Endothelial cell of umbilical vein (primary cell): ENCODE measurements at regions of chr3 and their contacts with region 1.

Region 1: DNA sequence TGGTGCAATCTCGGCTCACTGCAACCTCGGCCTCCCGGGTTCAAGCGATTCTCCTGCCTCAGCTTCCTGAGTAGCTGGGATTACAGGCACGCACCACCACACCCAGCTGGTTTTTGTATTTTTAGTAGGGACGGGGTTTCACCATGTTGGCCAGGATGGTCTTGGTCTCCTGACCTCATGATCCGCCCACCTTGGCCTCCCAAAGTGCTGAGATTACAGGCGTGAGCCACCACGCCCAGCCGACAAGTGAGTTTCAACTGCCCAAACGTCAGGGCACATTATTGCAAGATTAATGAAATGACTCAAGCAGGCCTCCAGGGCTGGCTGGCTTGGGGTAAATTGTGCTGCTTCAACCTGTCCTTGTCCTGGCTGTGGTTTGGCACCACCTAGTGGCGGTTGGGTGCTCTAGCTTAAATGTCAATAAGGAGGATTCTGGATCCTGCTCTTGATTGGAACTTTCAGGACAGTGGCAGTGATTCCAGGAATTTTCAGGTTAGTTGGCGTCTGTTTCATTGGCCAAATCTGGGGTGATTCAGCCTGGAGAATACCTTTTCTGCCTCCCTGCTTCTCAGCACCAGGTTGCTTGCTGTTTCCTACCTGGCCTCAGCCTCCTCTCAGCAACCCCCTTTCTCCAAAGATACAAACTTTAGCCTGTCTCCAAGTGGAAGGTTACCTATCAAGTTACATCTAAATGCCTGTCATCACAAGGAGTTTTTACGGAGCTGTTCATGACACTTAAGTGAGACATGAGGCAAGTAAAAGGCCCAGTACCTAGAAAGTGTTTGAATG is 32.4 kb upstream of the SACM1L start:
- DNase-seq: peak; percentile 90
- H3K4me3 ChIP-seq: no peak overlapping the region
- H3K27ac ChIP-seq: no peak overlapping the region
- H3K4me1 ChIP-seq: peaks cover 17% of the 10 kb centered on the region
- H3K27me3 ChIP-seq: no peaks in the 10 kb centered on the region
- CTCF ChIP-seq: peak; percentile 91 to 93
- POLR2A ChIP-seq: no peak

Region 2: GRCh38 chr3:45037734-45038455 is 618.9 kb before region 1 on chr3:
- CTCF ChIA-PET with region 1: interaction called, 6 read pairs
- POLR2A ChIA-PET with region 1: no interaction called
- dilution Hi-C with region 1: no loop called
- intact Hi-C with region 1: loop called (anchors 1 kb)
- DNase-seq: peak; percentile 95
- H3K4me3 ChIP-seq: no peak overlapping the region
- H3K27ac ChIP-seq: no peak overlapping the region
- H3K4me1 ChIP-seq: no peaks in the 10 kb centered on the region
- H3K27me3 ChIP-seq: no peaks in the 10 kb centered on the region
- CTCF ChIP-seq: peak; percentile 94 to 95
- POLR2A ChIP-seq: no peak

Region 3: DNA sequence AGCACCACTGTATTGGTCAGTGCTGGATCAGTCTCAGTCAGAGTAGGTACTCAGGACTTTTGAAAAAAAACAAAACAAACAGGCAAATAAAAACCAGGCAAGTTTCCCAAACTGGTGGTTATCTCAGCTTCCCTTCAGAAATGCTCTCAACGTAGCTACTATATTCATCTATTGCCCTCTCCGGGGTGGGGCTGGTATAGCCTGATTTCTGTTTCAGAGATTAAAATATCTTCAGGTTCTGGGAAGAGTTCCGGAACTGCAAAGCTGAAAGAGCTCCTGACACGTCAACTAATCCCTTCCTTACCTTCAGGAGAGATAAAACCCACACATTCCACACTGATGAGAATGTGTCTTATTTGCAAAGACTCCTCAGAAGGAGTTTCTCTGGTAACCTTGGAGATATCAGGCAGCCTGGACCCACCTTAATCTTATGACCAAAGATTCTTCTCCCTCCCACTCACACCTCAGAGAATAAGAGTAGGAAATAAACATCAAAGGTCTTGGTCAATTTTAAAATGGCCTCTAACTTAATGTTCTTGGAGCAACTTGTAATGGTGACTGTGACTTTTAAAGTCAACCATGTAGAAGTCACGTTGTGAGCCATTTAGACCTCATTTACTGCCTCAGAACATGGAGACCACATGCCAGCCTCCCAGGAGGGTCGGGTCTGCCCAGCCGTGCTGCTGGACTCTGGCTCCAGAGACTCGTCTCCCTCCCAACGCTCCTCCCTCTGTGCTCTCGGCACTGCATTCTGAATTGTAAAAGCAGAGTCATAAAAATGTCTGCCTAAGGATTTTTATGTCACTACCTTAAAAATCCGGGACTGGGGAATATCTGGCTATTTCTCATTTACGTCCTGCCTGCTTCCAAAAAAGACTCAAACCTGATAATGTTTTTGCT is 564.4 kb before region 1 on chr3:
- CTCF ChIA-PET with region 1: no interaction called
- POLR2A ChIA-PET with region 1: no interaction called
- dilution Hi-C with region 1: no loop called
- intact Hi-C with region 1: no loop called
- DNase-seq: no peak
- H3K4me3 ChIP-seq: no peak overlapping the region
- H3K27ac ChIP-seq: no peak overlapping the region
- H3K4me1 ChIP-seq: no peaks in the 10 kb centered on the region
- H3K27me3 ChIP-seq: peaks cover 2 to 5% of the 10 kb centered on the region in 2 experiments
- CTCF ChIP-seq: no peak
- POLR2A ChIP-seq: no peak

Region 4: GRCh38 chr3:45507820-45508317 is 148.9 kb before region 1 on chr3:
- CTCF ChIA-PET with region 1: interaction called, 109 read pairs
- POLR2A ChIA-PET with region 1: interaction called, 12 read pairs
- dilution Hi-C with region 1: no loop called
- intact Hi-C with region 1: loop called (anchors 1 kb)
- DNase-seq: peak; percentile 53
- H3K4me3 ChIP-seq: no peak overlapping the region
- H3K27ac ChIP-seq: no peak overlapping the region
- H3K4me1 ChIP-seq: peaks cover 8% of the 10 kb centered on the region
- H3K27me3 ChIP-seq: no peaks in the 10 kb centered on the region
- CTCF ChIP-seq: peak; percentile 29 to 70
- POLR2A ChIP-seq: no peak

Region 5: GRCh38 chr3:45528429-45528828 is 128.3 kb before region 1 on chr3:
- CTCF ChIA-PET with region 1: interaction called, 10 read pairs
- POLR2A ChIA-PET with region 1: no interaction called
- dilution Hi-C with region 1: loop called (anchors 10 kb)
- intact Hi-C with region 1: no loop called
- DNase-seq: no peak
- H3K4me3 ChIP-seq: no peak overlapping the region
- H3K27ac ChIP-seq: no peak overlapping the region
- H3K4me1 ChIP-seq: no peaks in the 10 kb centered on the region
- H3K27me3 ChIP-seq: no peaks in the 10 kb centered on the region
- CTCF ChIP-seq: no peak
- POLR2A ChIP-seq: no peak

Region 6: GRCh38 chr3:45579251-45579650 is 77.5 kb before region 1 on chr3:
- CTCF ChIA-PET with region 1: interaction called, 11 read pairs
- POLR2A ChIA-PET with region 1: no interaction called
- dilution Hi-C with region 1: no loop called
- intact Hi-C with region 1: no loop called
- DNase-seq: no peak
- H3K4me3 ChIP-seq: no peak overlapping the region
- H3K27ac ChIP-seq: no peak overlapping the region
- H3K4me1 ChIP-seq: no peaks in the 10 kb centered on the region
- H3K27me3 ChIP-seq: peaks cover 0 to 4% of the 10 kb centered on the region in 2 experiments
- CTCF ChIP-seq: no peak
- POLR2A ChIP-seq: no peak

Region 7: GRCh38 chr3:45607790-45608189 is 49.0 kb before region 1 on chr3:
- CTCF ChIA-PET with region 1: interaction called, 13 read pairs
- POLR2A ChIA-PET with region 1: no interaction called
- dilution Hi-C with region 1: no loop called
- intact Hi-C with region 1: no loop called
- DNase-seq: no peak
- H3K4me3 ChIP-seq: no peak overlapping the region
- H3K27ac ChIP-seq: no peak overlapping the region
- H3K4me1 ChIP-seq: peaks cover 8% of the 10 kb centered on the region
- H3K27me3 ChIP-seq: no peaks in the 10 kb centered on the region
- CTCF ChIP-seq: no peak
- POLR2A ChIP-seq: no peak

Region 8: GRCh38 chr3:45688882-45689756 is 32.4 kb after region 1 on chr3 and contains the start of gene SACM1L:
- CTCF ChIA-PET with region 1: interaction called, 18 read pairs
- POLR2A ChIA-PET with region 1: interaction called, 4 read pairs
- dilution Hi-C with region 1: no loop called
- intact Hi-C with region 1: no loop called
- DNase-seq: peak; percentile 99
- H3K4me3 ChIP-seq: peak within 1 kb of the TSS; percentile 90 to 97 (median 94)
- H3K27ac ChIP-seq: peak within 1 kb of the TSS; percentile 77
- H3K4me1 ChIP-seq: peaks cover 33% of the 10 kb centered on the region
- H3K27me3 ChIP-seq: no peaks in the 10 kb centered on the region
- CTCF ChIP-seq: no peak
- POLR2A ChIP-seq: peak; percentile 79
- total RNA-seq, gene SACM1L: 35.4 and 39.9 TPM in 2 replicates

Region 9: GRCh38 chr3:46236294-46237054 is 579.7 kb after region 1 on chr3:
- CTCF ChIA-PET with region 1: no interaction called
- POLR2A ChIA-PET with region 1: no interaction called
- dilution Hi-C with region 1: no loop called
- intact Hi-C with region 1: no loop called
- DNase-seq: no peak
- H3K4me3 ChIP-seq: no peak overlapping the region
- H3K27ac ChIP-seq: no peak overlapping the region
- H3K4me1 ChIP-seq: no peaks in the 10 kb centered on the region
- H3K27me3 ChIP-seq: peaks cover 0 to 3% of the 10 kb centered on the region in 2 experiments
- CTCF ChIP-seq: no peak
- POLR2A ChIP-seq: no peak